ENCODE measurements at regions of chr10 and their contacts with region 1.

Region 1: DNA sequence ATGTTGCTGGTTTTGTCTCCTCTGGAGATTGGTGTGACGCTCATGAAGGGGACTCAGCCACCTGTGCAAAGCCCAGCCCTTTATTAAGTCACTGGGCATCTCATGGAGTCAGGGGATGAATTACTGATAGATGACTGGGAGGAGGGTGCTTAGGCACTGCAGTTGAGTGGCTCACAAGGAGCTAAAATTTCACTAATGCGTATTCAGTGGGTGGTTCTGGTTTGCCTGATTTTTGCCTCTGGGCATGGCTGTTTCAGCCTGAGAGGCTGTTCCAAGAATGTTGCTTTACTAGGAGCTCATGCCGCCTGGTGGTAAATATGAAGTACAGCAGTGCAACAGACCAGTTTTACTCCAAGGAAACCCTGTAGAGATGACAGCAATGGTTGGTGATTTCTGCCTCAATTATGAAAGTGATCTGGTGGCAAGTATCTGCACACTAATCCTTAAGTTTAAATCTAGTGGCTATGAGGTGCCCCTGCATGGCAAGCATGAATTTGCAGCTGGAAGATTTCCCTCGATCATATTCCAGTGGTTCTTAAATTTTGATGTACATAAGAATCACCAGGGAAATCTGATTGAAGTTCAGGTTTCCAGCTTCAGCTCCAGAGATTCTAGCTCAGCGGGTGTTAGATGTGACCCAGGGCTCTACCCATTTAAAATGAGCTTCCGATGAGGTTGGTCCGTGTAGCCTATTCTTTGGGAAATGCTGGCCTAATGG is 19.9 kb downstream of the ACTA2 start:
- DNase-seq: peak; percentile 71
- ATAC-seq: peak; percentile 78
- H3K4me3 ChIP-seq: no peak overlapping the region
- H3K4me3 Mint-ChIP-seq: no peak overlapping the region
- H3K27ac ChIP-seq: no peak overlapping the region
- H3K27ac Mint-ChIP-seq: peak overlapping the region; percentile 39
- H3K4me1 ChIP-seq: peaks cover 13 to 20% of the 10 kb centered on the region in 2 donors
- H3K4me1 Mint-ChIP-seq: peaks cover 33% of the 10 kb centered on the region
- H3K27me3 ChIP-seq: no peaks in the 10 kb centered on the region
- H3K27me3 Mint-ChIP-seq: no peaks in the 10 kb centered on the region
- CTCF ChIP-seq: peak; percentile 81

Region 2: GRCh38 chr10:88687853-88688467 is 244.7 kb before region 1 on chr10:
- CTCF ChIA-PET with region 1: no interaction called
- POLR2A ChIA-PET with region 1: no interaction called
- intact Hi-C with region 1: loop called (anchors 10 kb)
- DNase-seq: peak; percentile 19
- ATAC-seq: peak; percentile 36
- H3K4me3 ChIP-seq: no peak overlapping the region
- H3K4me3 Mint-ChIP-seq: no peak overlapping the region
- H3K27ac ChIP-seq: no peak overlapping the region
- H3K27ac Mint-ChIP-seq: no peak overlapping the region
- H3K4me1 ChIP-seq: no peaks in the 10 kb centered on the region
- H3K4me1 Mint-ChIP-seq: no peaks in the 10 kb centered on the region
- H3K27me3 ChIP-seq: peaks cover 0 to 1% (median 0%) of the 10 kb centered on the region in 4 experiments
- H3K27me3 Mint-ChIP-seq: peaks cover 10% of the 10 kb centered on the region
- CTCF ChIP-seq: peak; percentile 95

Region 3: GRCh38 chr10:88886557-88886956 is 46.1 kb before region 1 on chr10:
- CTCF ChIA-PET with region 1: interaction called, 63 read pairs
- POLR2A ChIA-PET with region 1: no interaction called
- intact Hi-C with region 1: loop called (anchors 2 kb)
- DNase-seq: peak; percentile 56
- ATAC-seq: peak; percentile 77
- H3K4me3 ChIP-seq: peak overlapping the region in 3 of 5 experiments; percentile 1 to 18 (median 12)
- H3K4me3 Mint-ChIP-seq: peak overlapping the region; percentile 76
- H3K27ac ChIP-seq: peak overlapping the region; percentile 24 to 71
- H3K27ac Mint-ChIP-seq: peak overlapping the region; percentile 80
- H3K4me1 ChIP-seq: peaks cover 40 to 59% of the 10 kb centered on the region in 2 donors
- H3K4me1 Mint-ChIP-seq: peaks cover 85% of the 10 kb centered on the region
- H3K27me3 ChIP-seq: no peaks in the 10 kb centered on the region
- H3K27me3 Mint-ChIP-seq: no peaks in the 10 kb centered on the region
- CTCF ChIP-seq: no peak

Region 4: DNA sequence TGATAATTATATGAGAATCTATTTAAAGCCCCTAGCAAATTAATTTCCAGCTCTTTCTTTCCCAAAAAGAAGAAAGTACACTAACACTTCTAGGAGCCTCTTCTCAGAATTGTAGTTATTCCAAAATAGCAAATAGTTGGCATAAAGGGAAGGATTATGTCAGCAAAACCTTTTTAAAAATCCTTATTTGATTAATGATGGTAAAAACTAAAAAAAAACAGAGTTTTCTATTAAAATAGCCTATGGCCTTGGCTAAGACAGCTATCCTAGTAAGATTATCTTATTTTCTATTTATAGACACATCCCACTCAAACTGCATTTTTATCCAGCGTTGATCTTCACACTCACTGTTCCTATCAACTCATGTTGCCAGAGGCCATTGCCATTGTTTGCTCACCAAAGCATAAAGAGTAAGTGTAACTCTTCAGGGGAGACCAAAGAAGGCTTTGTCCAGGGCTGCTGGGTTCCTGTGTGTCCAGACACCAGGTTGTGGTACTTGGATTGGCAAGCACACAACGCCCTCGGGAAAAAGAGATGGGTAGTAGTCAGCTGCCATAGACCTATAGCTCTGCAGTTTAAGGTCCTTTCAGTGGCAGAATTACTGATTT is 11.6 kb before region 1 on chr10:
- CTCF ChIA-PET with region 1: interaction called, 34 read pairs
- POLR2A ChIA-PET with region 1: no interaction called
- intact Hi-C with region 1: no loop called
- DNase-seq: no peak
- ATAC-seq: no peak
- H3K4me3 ChIP-seq: no peak overlapping the region
- H3K4me3 Mint-ChIP-seq: no peak overlapping the region
- H3K27ac ChIP-seq: no peak overlapping the region
- H3K27ac Mint-ChIP-seq: no peak overlapping the region
- H3K4me1 ChIP-seq: no peaks in the 10 kb centered on the region
- H3K4me1 Mint-ChIP-seq: no peaks in the 10 kb centered on the region
- H3K27me3 ChIP-seq: no peaks in the 10 kb centered on the region
- H3K27me3 Mint-ChIP-seq: no peaks in the 10 kb centered on the region
- CTCF ChIP-seq: no peak

Region 5: DNA sequence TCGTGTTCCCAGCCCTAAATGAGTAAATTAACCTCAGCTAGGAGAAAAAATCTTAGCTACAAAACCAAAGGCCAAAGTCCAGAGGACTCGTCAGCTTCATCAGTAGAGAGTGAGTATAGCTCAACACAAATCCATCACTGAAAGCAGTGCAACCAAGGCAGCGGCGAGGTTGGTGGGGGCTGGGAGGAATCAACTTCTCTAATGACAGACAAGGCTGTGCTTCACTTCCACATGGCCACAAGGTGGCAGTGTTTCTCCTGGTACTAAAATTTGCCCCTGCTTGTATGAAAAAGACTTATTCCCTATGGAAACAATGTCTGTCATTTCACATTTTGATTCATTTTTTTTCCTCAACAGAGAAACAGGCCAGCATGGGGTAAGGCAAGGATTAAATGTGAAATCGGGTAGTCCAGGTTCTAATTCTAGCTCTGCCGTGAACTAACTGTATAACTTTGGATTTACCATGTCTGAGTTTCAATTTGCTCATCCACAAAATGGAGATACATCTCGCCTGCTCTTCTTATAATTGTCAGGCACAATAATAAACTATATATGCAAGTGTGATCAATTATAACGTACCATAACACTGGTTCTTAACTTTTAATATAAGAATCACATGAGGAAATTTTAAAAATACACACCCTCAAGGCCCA is 97.2 kb after region 1 on chr10:
- CTCF ChIA-PET with region 1: interaction called, 55 read pairs
- POLR2A ChIA-PET with region 1: no interaction called
- intact Hi-C with region 1: loop called (anchors 1 kb)
- DNase-seq: peak; percentile 76
- ATAC-seq: peak; percentile 72
- H3K4me3 ChIP-seq: no peak overlapping the region
- H3K4me3 Mint-ChIP-seq: no peak overlapping the region
- H3K27ac ChIP-seq: no peak overlapping the region
- H3K27ac Mint-ChIP-seq: no peak overlapping the region
- H3K4me1 ChIP-seq: peaks cover 8% of the 10 kb centered on the region in 2 donors
- H3K4me1 Mint-ChIP-seq: peaks cover 12% of the 10 kb centered on the region
- H3K27me3 ChIP-seq: no peaks in the 10 kb centered on the region
- H3K27me3 Mint-ChIP-seq: no peaks in the 10 kb centered on the region
- CTCF ChIP-seq: peak; percentile 95

Region 6: DNA sequence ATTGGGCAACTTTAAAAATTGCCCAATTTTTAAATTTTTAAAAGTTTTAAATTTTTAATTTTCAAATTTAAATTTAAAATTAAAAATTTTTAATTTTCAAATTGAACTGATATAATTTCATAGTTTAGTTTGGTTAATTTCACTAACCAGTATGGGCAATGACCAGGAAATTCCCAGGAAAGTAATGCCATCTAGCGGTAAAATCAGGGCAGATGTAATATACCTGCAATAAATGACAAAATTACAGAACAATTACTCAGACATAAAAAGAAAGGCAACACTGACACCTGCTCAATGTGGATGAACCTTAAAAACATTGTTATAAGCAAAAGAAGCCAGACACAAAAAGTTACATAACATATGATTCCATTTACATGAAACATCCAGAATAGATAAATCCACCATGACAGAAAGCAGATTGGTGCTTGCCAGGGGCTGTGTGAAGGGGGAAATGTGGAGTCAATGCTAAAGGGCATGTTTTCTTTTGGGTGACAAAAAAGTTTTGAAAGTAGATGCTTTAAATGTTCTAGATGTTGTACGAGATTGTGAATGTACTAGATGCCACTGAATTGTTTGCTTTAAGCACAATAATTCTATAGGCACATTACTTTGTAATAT is 631.3 kb after region 1 on chr10:
- CTCF ChIA-PET with region 1: no interaction called
- POLR2A ChIA-PET with region 1: no interaction called
- intact Hi-C with region 1: loop called (anchors 10 kb)
- DNase-seq: peak; percentile 67
- ATAC-seq: peak; percentile 53
- H3K4me3 ChIP-seq: no peak overlapping the region
- H3K4me3 Mint-ChIP-seq: no peak overlapping the region
- H3K27ac ChIP-seq: no peak overlapping the region
- H3K27ac Mint-ChIP-seq: no peak overlapping the region
- H3K4me1 ChIP-seq: no peaks in the 10 kb centered on the region
- H3K4me1 Mint-ChIP-seq: no peaks in the 10 kb centered on the region
- H3K27me3 ChIP-seq: no peaks in the 10 kb centered on the region
- H3K27me3 Mint-ChIP-seq: peaks cover 9% of the 10 kb centered on the region
- CTCF ChIP-seq: peak; percentile 84

Measured in B cell (primary cell).